HepG2 (cell line): ENCODE measurements at regions of chr2 and their contacts with region 1.

Region 1: GRCh38 chr2:20446917-20447436 is at the start of gene RHOB:
- DNase-seq: peak; percentile 98
- ATAC-seq: peak; percentile 82
- H3K4me3 ChIP-seq: peak within 1 kb of the TSS; percentile 78 to 97 (median 89)
- H3K27ac ChIP-seq: peak within 1 kb of the TSS; percentile 92
- H3K4me1 ChIP-seq: peaks cover 60% of the 10 kb centered on the region
- H3K27me3 ChIP-seq: no peaks in the 10 kb centered on the region; a peak in 1 of 5 replicates
- CTCF ChIP-seq: no peak
- EP300 ChIP-seq: peak; percentile 35 to 54; a peak in 1 of 4 replicates
- POLR2A ChIP-seq: peak; percentile 100
- RAD21 ChIP-seq: peak; percentile 65
- total RNA-seq, gene RHOB: 192 and 268 TPM in 2 replicates

Region 2: DNA sequence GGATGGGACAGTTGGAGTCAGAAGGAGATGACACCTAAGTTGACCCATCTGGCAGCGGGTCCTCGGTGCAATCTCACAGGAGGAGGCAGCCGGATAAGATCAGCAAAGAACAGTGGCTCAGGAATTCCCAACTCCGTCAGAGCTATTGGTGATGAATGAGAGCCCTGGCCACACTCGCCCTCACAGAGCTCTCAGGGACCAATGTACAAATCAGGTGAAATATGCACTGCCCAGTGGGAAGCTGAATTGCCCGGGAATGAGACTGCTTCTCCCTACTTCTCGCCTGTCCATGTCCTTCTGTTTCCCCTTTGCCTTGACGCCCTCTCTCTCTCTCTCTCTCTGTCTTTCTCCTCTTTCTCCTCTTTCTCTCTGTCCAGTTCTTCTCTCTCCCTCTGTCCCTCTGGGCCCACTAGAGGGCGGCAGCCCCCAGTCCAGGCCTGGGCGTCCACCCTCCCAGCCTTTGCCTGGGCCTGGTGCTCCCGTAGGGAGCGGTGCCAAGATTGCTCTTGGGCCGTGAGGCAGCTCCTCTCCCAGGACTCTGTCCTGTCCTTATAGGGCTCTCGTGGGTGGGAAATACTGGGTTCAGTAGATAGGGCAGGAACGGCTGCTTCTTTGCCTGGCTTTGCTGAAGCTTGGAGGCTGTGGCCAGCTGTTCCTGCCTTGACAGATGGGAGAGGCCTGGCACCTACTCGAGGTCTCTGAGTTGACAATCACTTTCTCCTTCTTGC is 68.0 kb before region 1 on chr2:
- CTCF ChIA-PET with region 1: no interaction called
- POLR2A ChIA-PET with region 1: interaction called, 16 read pairs
- in situ Hi-C with region 1: no loop called
- intact Hi-C with region 1: no loop called
- DNase-seq: peak; percentile 80
- ATAC-seq: peak; percentile 98
- H3K4me3 ChIP-seq: peak overlapping the region in 2 of 3 experiments; percentile 21 to 59; a peak in 2 of 6 replicates
- H3K27ac ChIP-seq: no peak overlapping the region
- H3K4me1 ChIP-seq: peaks cover 51% of the 10 kb centered on the region
- H3K27me3 ChIP-seq: peaks cover 2 to 11% of the 10 kb centered on the region in 2 experiments; a peak in 2 of 5 replicates
- CTCF ChIP-seq: peak; percentile 98
- EP300 ChIP-seq: no peak
- POLR2A ChIP-seq: no peak
- RAD21 ChIP-seq: peak; percentile 88

Region 3: GRCh38 chr2:20474757-20475566 is 28.0 kb after region 1 on chr2:
- CTCF ChIA-PET with region 1: no interaction called
- POLR2A ChIA-PET with region 1: interaction called, 52 read pairs
- in situ Hi-C with region 1: no loop called
- intact Hi-C with region 1: no loop called
- DNase-seq: peak; percentile 74
- ATAC-seq: peak; percentile 84
- H3K4me3 ChIP-seq: no peak overlapping the region
- H3K27ac ChIP-seq: no peak overlapping the region
- H3K4me1 ChIP-seq: peaks cover 32% of the 10 kb centered on the region
- H3K27me3 ChIP-seq: peaks cover 5% of the 10 kb centered on the region in 2 experiments; a peak in 3 of 5 replicates
- CTCF ChIP-seq: no peak
- EP300 ChIP-seq: peak in 1 of 2 experiments; percentile 35; a peak in 1 of 4 replicates
- POLR2A ChIP-seq: no peak
- RAD21 ChIP-seq: 0 out of 2 replicates have a peak, but pooled peaks have one; percentile 11

Region 4: GRCh38 chr2:20516646-20517341 is 69.8 kb after region 1 on chr2:
- CTCF ChIA-PET with region 1: no interaction called
- POLR2A ChIA-PET with region 1: interaction called, 233 read pairs
- in situ Hi-C with region 1: no loop called
- intact Hi-C with region 1: no loop called
- DNase-seq: peak; percentile 58
- ATAC-seq: peak; percentile 60
- H3K4me3 ChIP-seq: no peak overlapping the region
- H3K27ac ChIP-seq: no peak overlapping the region
- H3K4me1 ChIP-seq: peaks cover 42% of the 10 kb centered on the region
- H3K27me3 ChIP-seq: no peaks in the 10 kb centered on the region; a peak in 1 of 5 replicates
- CTCF ChIP-seq: no peak
- EP300 ChIP-seq: peak in 1 of 2 experiments; percentile 41; a peak in 2 of 4 replicates
- POLR2A ChIP-seq: no peak
- RAD21 ChIP-seq: no peak

Region 5: GRCh38 chr2:20578895-20579825 is 132.2 kb after region 1 on chr2:
- CTCF ChIA-PET with region 1: no interaction called
- POLR2A ChIA-PET with region 1: interaction called, 1,537 read pairs
- in situ Hi-C with region 1: no loop called
- intact Hi-C with region 1: loop called (anchors 1 kb)
- DNase-seq: peak; percentile 100
- ATAC-seq: peak; percentile 83
- H3K4me3 ChIP-seq: 0 out of 6 replicates have a peak overlapping the region, but pooled peaks of 1 of the 3 experiments have one; percentile 0
- H3K27ac ChIP-seq: peak overlapping the region; percentile 97
- H3K4me1 ChIP-seq: peaks cover 98% of the 10 kb centered on the region
- H3K27me3 ChIP-seq: no peaks in the 10 kb centered on the region
- CTCF ChIP-seq: peak; percentile 21; the same call in 1 of the 2 replicates
- EP300 ChIP-seq: peak; percentile 93 to 98
- POLR2A ChIP-seq: peak in 1 of 2 experiments; percentile 49; a peak in 1 of 4 replicates
- RAD21 ChIP-seq: peak; percentile 75

Region 6: GRCh38 chr2:20635675-20636584 is 189.0 kb after region 1 on chr2:
- CTCF ChIA-PET with region 1: interaction called, 51 read pairs
- POLR2A ChIA-PET with region 1: interaction called, 84 read pairs
- in situ Hi-C with region 1: loop called (anchors 5 kb)
- intact Hi-C with region 1: loop called (anchors 1 kb)
- DNase-seq: peak; percentile 74
- ATAC-seq: peak; percentile 96
- H3K4me3 ChIP-seq: no peak overlapping the region; a peak in 1 of 6 replicates
- H3K27ac ChIP-seq: peak overlapping the region; percentile 23
- H3K4me1 ChIP-seq: peaks cover 55% of the 10 kb centered on the region
- H3K27me3 ChIP-seq: no peaks in the 10 kb centered on the region
- CTCF ChIP-seq: peak; percentile 100
- EP300 ChIP-seq: peak in 1 of 2 experiments; percentile 29; a peak in 1 of 4 replicates
- POLR2A ChIP-seq: no peak
- RAD21 ChIP-seq: peak; percentile 100